Aorta (tissue), 5 donors: ENCODE measurements at regions of chr22 and their contacts with region 1.

Region 1: DNA sequence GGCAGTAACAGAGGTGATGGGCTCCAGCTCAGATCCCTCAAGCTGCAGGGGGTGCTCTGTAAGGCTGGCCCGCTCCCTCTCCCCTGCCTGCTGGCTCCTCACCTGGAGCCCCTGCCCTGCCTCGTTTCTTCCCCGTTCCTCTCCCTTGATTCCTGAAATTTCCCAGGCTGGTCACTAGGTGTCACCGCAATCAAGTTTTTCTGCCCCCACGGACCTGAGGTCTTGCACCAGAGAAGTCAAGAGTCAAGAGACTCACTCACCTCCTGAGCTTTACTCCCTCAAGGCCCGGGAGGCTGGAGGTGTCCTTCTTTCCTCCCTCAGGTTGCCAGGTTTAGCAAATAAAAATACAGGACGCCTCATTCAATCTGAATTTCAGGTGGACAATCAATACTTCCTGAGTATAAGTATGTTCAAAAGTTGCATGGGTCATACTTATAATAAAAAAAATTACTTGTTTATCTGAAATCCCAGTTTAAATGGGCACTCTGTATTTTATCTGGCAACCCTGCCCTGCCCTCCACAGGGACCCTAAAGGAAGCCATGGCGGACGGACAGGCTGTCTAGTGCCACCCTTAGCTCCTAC is 69.2 kb downstream of the SCUBE1 start:
- DNase-seq: no peak
- ATAC-seq: no peak
- H3K4me3 ChIP-seq: no peak overlapping the region
- H3K27ac ChIP-seq: no peak overlapping the region
- H3K4me1 ChIP-seq: no peaks in the 10 kb centered on the region
- H3K27me3 ChIP-seq: no peaks in the 10 kb centered on the region

Region 2: GRCh38 chr22:43346521-43346929 is 72.5 kb after region 1 on chr22:
- intact Hi-C with region 1: loop called (anchors 2 to 5 kb)
- DNase-seq: peak; percentile 54 to 84
- ATAC-seq: peak; percentile 37
- H3K4me3 ChIP-seq: no peak overlapping the region
- H3K27ac ChIP-seq: no peak overlapping the region
- H3K4me1 ChIP-seq: no peaks in the 10 kb centered on the region
- H3K27me3 ChIP-seq: no peaks in the 10 kb centered on the region

Region 3: DNA sequence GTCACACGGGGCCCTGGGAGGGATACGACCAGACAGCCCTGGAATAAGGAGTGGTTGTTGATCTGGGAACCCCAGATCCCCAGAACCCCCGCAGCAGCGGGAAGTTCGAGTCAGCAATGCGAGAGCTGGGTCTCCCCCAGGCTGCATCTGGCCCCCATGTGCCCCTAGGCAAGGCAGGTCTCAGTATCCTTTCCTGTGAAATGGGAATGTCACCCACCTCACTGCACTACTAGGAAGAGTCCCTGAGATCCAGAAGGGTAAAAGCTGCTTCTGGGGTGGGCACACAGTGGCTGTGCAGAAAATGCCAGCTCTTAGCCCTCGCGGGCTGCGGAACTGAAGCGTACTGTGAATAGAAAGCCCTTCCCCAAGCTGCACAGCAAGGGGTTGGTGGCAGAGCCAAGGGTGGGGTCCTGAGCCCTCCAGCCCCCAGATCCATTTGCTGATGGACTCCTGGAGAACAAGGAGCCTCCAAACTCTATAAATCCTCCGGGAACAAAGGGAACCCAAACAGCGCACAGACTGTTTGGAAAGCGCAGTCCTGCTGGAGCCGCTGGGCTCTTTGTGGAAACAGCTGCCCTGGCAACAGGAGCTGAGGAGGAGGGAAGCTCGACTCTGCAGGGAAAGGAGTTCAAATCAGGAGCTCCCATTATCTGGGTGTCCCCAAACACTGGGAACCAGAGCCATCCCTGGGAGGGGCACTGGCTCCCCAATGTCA is 1106.9 kb after region 1 on chr22:
- intact Hi-C with region 1: no loop called
- DNase-seq: peak; percentile 24 to 42
- ATAC-seq: no peak
- H3K4me3 ChIP-seq: no peak overlapping the region
- H3K27ac ChIP-seq: no peak overlapping the region
- H3K4me1 ChIP-seq: no peaks in the 10 kb centered on the region
- H3K27me3 ChIP-seq: peaks cover 0 to 1% of the 10 kb centered on the region in 2 donors